K562 (cell line): ENCODE measurements at regions of chr6 and their contacts with region 1.

Region 1: GRCh38 chr6:27545271-27546046 is 72.6 kb upstream of the ZNF184 start:
- DNase-seq: peak; percentile 52 to 97 (median 68)
- ATAC-seq: peak; percentile 62
- H3K4me3 ChIP-seq: peak overlapping the region; percentile 50
- H3K27ac ChIP-seq: peak overlapping the region; percentile 77
- H3K4me1 ChIP-seq: peaks cover 4 to 25% of the 10 kb centered on the region in 2 experiments; a peak in 4 of 5 replicates
- H3K27me3 ChIP-seq: no peaks in the 10 kb centered on the region
- CTCF ChIP-seq: no peak
- EP300 ChIP-seq: peak; percentile 70
- POLR2A ChIP-seq: no peak
- RAD21 ChIP-seq: peak in 1 of 2 experiments; percentile 33; a peak in 1 of 4 replicates

Region 2: GRCh38 chr6:27479319-27480182 is 65.9 kb before region 1 on chr6:
- CTCF ChIA-PET with region 1: no interaction called
- POLR2A ChIA-PET with region 1: interaction called, 4 read pairs
- in situ Hi-C with region 1: no loop called
- intact Hi-C with region 1: loop called (anchors 2 kb)
- DNase-seq: peak; percentile 57 to 89 (median 66)
- ATAC-seq: peak; percentile 76
- H3K4me3 ChIP-seq: peak overlapping the region; percentile 64
- H3K27ac ChIP-seq: peak overlapping the region; percentile 85
- H3K4me1 ChIP-seq: peaks cover 4 to 8% of the 10 kb centered on the region in 2 experiments; a peak in 2 of 5 replicates
- H3K27me3 ChIP-seq: no peaks in the 10 kb centered on the region
- CTCF ChIP-seq: 0 out of 6 replicates have a peak, but pooled peaks of 1 of the 3 experiments have one; percentile 5
- EP300 ChIP-seq: peak; percentile 34
- POLR2A ChIP-seq: peak; percentile 54; the same call in 1 of the 2 replicates
- RAD21 ChIP-seq: no peak; a peak in 2 of 4 replicates

Region 3: DNA sequence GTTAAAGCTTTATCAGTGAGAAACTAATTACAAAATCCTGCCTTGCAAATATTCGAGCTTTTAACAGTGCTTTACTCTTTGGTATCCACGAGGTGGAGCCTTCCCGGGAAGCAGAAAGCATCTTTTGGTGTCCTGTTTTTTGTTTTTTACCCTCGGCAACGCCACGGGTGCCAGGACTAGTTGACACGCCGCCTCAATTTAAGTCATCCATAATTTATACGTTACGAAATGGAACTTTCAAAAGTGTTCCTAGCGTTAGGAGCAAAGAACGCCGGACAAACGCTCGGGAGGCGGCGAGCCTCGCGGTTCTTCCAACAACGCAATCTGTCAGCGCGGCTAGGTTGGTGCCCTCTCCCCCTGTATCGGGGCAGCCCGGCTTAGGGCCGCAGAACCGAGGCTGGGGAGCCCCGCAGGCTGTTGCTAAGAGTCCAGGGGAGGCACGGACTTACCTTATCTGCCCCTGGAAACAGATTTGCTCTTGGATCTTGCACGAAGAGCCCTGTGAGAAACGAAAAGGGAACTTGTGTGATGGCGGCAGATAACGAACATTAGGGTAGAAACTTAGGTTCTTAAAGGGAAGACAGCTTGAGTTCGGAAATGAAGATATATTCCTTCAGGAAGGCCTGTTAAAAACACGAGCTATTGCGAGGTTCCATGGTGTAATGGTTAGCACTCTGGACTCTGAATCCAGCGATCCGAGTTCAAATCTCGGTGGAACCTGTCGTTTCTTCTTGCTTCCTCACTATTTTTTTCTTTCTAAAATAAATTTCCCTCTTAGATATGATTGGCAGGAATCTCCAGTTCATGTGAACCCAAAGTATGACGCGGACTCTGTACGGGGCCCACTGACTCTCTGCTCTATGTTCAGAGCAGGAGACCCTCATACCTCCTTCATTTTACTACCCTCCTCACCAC is 26.3 kb before region 1 on chr6:
- CTCF ChIA-PET with region 1: no interaction called
- POLR2A ChIA-PET with region 1: interaction called, 4 read pairs
- in situ Hi-C with region 1: no loop called
- intact Hi-C with region 1: loop called (anchors 2 kb)
- DNase-seq: peak; percentile 66 to 93 (median 69)
- ATAC-seq: peak; percentile 89
- H3K4me3 ChIP-seq: peak overlapping the region; percentile 69
- H3K27ac ChIP-seq: peak overlapping the region; percentile 82
- H3K4me1 ChIP-seq: peaks cover 4 to 7% of the 10 kb centered on the region in 2 experiments; a peak in 3 of 5 replicates
- H3K27me3 ChIP-seq: no peaks in the 10 kb centered on the region
- CTCF ChIP-seq: peak; percentile 77 to 90 (median 86)
- EP300 ChIP-seq: peak; percentile 63
- POLR2A ChIP-seq: peak; percentile 66
- RAD21 ChIP-seq: peak; percentile 76 to 80

Region 4: DNA sequence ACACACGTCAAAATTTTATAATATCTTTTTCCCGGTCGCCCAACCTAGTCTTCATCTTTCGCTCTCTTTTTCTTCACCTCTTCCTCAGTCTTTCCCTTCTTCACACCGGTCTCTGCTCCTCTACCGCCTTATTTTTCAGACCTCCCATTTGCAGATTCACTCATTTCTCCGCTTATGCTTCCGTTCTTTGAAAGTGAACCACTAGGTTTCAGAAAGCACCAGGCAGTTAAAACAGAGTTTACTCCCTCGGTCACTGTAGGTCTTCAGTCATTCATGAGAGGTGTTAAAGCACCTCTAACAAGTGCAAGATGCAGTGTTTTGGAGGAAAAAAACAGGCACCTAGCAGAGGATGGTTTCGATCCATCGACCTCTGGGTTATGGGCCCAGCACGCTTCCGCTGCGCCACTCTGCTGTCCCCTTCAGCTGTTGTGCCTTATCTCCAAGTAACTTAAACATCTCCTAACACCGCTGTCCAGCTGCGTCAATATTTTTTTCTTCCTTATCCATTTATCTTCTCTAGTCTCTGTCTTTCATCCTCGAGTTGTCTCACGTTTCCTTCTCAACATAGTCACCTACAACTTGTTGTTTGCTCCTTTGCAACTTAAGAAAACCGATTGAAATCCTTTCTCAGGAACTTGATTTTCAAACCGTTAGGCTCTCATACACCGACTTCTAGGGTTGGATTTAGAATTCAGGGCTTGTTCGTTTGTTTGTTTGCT is 47.2 kb after region 1 on chr6:
- CTCF ChIA-PET with region 1: no interaction called
- POLR2A ChIA-PET with region 1: interaction called, 5 read pairs
- in situ Hi-C with region 1: no loop called
- intact Hi-C with region 1: loop called (anchors 2 kb)
- DNase-seq: peak; percentile 76 to 94 (median 86)
- ATAC-seq: peak; percentile 94
- H3K4me3 ChIP-seq: peak overlapping the region; percentile 48
- H3K27ac ChIP-seq: peak overlapping the region; percentile 53
- H3K4me1 ChIP-seq: peaks cover 8 to 13% of the 10 kb centered on the region in 2 experiments; a peak in 4 of 5 replicates
- H3K27me3 ChIP-seq: no peaks in the 10 kb centered on the region
- CTCF ChIP-seq: peak in 1 of 3 experiments; percentile 20; a peak in 2 of 6 replicates
- EP300 ChIP-seq: peak; percentile 84
- POLR2A ChIP-seq: no peak
- RAD21 ChIP-seq: peak; percentile 33 to 47; a peak in 3 of 4 replicates

Region 5: GRCh38 chr6:27601668-27602254 is 56.3 kb after region 1 on chr6:
- CTCF ChIA-PET with region 1: no interaction called
- POLR2A ChIA-PET with region 1: interaction called, 11 read pairs
- in situ Hi-C with region 1: no loop called
- intact Hi-C with region 1: loop called (anchors 2 kb)
- DNase-seq: peak; percentile 56 to 84 (median 68)
- ATAC-seq: peak; percentile 80
- H3K4me3 ChIP-seq: peak overlapping the region; percentile 57
- H3K27ac ChIP-seq: peak overlapping the region; percentile 82
- H3K4me1 ChIP-seq: peaks cover 8 to 13% of the 10 kb centered on the region in 2 experiments; a peak in 3 of 5 replicates
- H3K27me3 ChIP-seq: no peaks in the 10 kb centered on the region
- CTCF ChIP-seq: no peak
- EP300 ChIP-seq: no peak
- POLR2A ChIP-seq: peak; percentile 58; the same call in 1 of the 2 replicates
- RAD21 ChIP-seq: no peak

Region 6: DNA sequence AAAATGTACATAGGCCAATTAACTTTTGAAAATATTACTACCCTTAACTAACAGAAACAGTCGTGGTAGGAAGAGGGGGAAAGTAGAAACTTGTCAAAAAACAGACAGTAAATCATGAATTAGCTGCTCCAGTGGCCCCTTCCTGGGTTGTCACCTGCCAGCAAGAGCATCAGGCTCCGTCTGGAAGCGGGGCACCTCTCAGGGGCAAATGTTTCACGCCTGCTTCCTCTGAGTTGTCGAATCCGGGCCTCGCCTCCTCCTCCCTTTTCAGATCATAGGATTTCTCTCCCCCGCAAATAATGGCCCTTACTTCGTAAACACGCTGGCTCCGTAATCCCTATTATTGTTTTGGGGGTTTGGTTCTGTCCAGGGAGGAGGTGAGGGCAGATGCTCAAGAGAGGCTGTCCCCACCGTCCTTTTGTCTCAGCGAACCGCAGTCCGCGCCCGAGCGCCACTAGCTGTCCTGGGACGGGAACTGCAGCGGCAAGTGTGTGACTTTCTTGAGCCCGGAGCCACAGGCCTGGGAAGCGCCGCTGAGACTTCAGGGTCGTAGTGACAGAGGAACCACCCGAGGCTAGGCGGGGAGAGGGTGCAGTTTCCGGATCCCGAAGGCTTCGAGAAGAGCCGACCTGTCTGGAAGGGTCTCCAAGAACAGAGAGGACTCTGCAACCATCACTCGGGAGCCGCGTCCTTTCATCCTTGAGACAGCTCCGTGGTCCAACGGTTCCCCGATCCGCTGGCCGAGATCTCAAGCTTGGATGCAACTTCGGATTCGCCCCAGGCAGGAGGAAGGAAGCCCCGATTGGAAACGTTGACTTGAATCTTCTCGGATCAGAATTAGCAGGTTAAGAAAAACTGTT is 141.9 kb after region 1 on chr6:
- CTCF ChIA-PET with region 1: interaction called, 3 read pairs
- POLR2A ChIA-PET with region 1: interaction called, 3 read pairs
- in situ Hi-C with region 1: no loop called
- intact Hi-C with region 1: loop called (anchors 5 kb)
- DNase-seq: peak; percentile 78 to 97 (median 82)
- ATAC-seq: peak; percentile 89
- H3K4me3 ChIP-seq: peak overlapping the region; percentile 63
- H3K27ac ChIP-seq: peak overlapping the region; percentile 78
- H3K4me1 ChIP-seq: peaks cover 5 to 24% of the 10 kb centered on the region in 2 experiments; a peak in 4 of 5 replicates
- H3K27me3 ChIP-seq: no peaks in the 10 kb centered on the region
- CTCF ChIP-seq: peak; percentile 92 to 96 (median 95)
- EP300 ChIP-seq: 0 out of 2 replicates have a peak, but pooled peaks have one; percentile 14
- POLR2A ChIP-seq: no peak
- RAD21 ChIP-seq: peak; percentile 71 to 87

Region 7: DNA sequence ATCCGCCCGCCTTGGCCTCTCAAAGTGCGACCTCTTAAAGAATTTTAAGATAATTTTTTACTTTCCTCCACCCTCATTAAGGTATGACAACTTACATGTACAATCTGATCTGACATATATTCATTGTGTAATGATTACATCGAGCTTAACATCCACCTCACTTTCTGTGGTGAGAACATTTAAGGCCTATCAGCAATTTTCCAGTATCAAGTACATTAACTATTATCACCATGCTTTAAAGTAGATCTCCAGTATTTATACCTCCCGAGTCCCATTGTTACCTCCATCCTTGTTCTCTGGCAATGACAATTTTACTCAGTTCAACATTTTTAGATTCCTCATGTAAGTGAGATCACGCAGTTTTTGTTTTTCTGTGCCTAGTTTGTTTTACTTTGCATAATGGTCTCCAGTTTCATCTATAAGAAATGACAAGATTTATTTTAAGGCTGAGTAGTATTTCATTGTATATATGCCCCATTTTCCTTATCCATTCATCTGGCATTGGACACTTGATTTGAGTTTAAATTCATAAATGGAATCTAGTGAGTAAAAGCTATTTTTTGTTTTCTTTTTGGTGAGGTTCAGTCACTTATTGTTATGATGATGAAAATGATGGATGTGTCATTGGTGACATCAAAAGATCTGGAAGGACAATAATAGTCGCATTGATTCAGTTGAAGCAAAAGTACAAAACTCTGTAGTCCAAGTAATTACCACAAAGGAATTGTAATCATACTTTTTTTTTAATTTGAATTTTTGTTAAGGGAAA is 279.8 kb after region 1 on chr6:
- CTCF ChIA-PET with region 1: no interaction called
- POLR2A ChIA-PET with region 1: no interaction called
- in situ Hi-C with region 1: no loop called
- intact Hi-C with region 1: no loop called
- DNase-seq: peak in 1 of 4 experiments; percentile 12
- ATAC-seq: no peak
- H3K4me3 ChIP-seq: peak overlapping the region; percentile 50
- H3K27ac ChIP-seq: peak overlapping the region; percentile 83
- H3K4me1 ChIP-seq: peaks cover 0 to 8% of the 10 kb centered on the region in 2 experiments; a peak in 3 of 5 replicates
- H3K27me3 ChIP-seq: no peaks in the 10 kb centered on the region
- CTCF ChIP-seq: no peak
- EP300 ChIP-seq: no peak
- POLR2A ChIP-seq: peak; percentile 38
- RAD21 ChIP-seq: no peak